ENCODE measurements at regions of chr1 and their contacts with region 1.

Region 1: GRCh38 chr1:4330805-4331766 is 323.3 kb upstream of the AJAP1 start:
- DNase-seq: no peak
- H3K4me3 ChIP-seq: no peak overlapping the region
- H3K4me1 ChIP-seq: no peaks in the 10 kb centered on the region
- H3K27me3 ChIP-seq: no peaks in the 10 kb centered on the region

Region 2: DNA sequence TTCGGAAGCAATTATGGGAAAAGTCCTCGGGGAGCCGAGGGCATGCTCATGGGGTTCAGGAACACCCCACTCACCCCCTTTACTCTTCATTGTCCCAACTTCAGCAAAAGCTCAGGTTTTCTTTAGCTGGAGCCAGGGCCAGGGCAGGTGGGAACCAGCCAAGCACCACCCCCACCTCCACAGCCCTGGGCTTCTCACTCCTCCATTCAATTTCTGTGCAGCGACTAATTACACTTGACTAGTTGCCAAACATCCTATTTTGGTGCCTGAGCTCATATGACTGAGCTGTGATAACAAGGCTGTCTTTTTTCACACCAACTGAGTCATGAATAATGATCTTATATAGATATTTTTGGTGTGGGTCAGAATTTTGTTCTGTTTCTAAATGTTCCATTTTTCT is 66.1 kb after region 1 on chr1:
- in situ Hi-C with region 1: loop called (anchors 10 kb)
- DNase-seq: no peak
- H3K4me3 ChIP-seq: no peak overlapping the region
- H3K4me1 ChIP-seq: no peaks in the 10 kb centered on the region
- H3K27me3 ChIP-seq: no peaks in the 10 kb centered on the region

Measured in HAP-1 (cell line).